Vagina (tissue), 2 donors: ENCODE measurements at regions of chr16 and their contacts with region 1.

Region 1: GRCh38 chr16:1705688-1706385 is at the start of gene MAPK8IP3:
- DNase-seq: peak in 1 of 2 donors; percentile 91
- H3K4me3 ChIP-seq: peak within 1 kb of the TSS; percentile 76 to 94
- H3K27ac ChIP-seq: peak within 1 kb of the TSS; percentile 82
- H3K4me1 ChIP-seq: peaks cover 40% of the 10 kb centered on the region
- H3K27me3 ChIP-seq: no peaks in the 10 kb centered on the region
- CTCF ChIP-seq: peak; percentile 94 to 98 (median 95)
- POLR2A ChIP-seq: peak; percentile 22 to 90
- total RNA-seq, gene MAPK8IP3: 44.9 TPM

Region 2: GRCh38 chr16:1428511-1428910 is 277.3 kb before region 1 on chr16:
- intact Hi-C with region 1: loop called (anchors 10 kb)
- DNase-seq: no peak
- H3K4me3 ChIP-seq: no peak overlapping the region
- H3K27ac ChIP-seq: no peak overlapping the region
- H3K4me1 ChIP-seq: no peaks in the 10 kb centered on the region
- H3K27me3 ChIP-seq: no peaks in the 10 kb centered on the region
- CTCF ChIP-seq: no peak
- POLR2A ChIP-seq: no peak

Region 3: DNA sequence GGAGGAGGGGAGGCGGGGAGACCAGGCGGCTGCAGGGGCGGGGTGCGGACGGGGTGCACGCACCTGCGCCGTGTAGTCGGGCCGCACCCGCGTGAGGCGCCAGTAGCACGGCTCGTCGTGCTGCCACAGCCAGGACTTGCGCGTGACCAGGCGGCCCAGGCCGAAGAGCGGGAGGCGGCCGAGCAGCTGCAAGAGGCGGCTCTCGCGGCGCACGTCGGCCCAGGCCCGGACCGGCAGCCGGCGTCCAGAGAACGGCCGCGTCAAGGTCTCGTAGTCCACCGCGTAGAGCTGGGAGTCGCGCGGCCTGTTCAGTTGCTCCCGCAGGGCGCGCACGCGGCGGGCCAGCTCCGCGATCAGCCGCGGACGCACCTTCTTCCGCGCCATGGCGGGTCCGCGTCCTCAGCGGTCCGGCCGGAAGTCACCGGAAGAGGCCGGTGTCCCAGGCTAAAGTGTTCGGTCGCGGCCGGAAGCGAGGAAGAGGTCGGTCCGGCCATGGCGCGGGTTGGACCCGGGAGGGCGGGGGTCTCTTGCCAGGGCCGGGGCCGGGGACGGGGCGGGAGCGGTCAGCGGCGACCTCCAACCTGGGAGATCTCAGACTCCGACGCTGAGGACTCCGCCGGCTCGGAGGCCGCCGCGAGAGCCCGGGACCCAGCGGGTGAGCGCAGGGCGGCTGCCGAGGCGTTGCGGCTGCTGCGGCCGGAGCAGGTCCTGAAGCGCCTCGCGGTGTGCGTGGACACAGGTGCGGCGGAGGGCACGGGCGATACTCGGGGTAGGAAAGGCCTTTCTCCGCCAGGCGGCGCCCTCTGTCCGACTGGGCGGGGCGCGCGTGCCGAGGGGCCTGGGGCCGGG is 67.1 kb after region 1 on chr16 and contains the starts of genes EME2 and MRPS34:
- intact Hi-C with region 1: loop called (anchors 5 kb)
- DNase-seq: no peak
- H3K4me3 ChIP-seq: peak within 1 kb of the TSS; percentile 82
- H3K27ac ChIP-seq: peak within 1 kb of the TSS; percentile 90
- H3K4me1 ChIP-seq: peaks cover 45% of the 10 kb centered on the region
- H3K27me3 ChIP-seq: no peaks in the 10 kb centered on the region
- CTCF ChIP-seq: peak; percentile 36 to 81 (median 51)
- POLR2A ChIP-seq: peak in 1 of 2 donors; percentile 45
- total RNA-seq, gene EME2: 13.5 TPM
- total RNA-seq, gene MRPS34: 89.6 TPM